WTC11 (cell line): ENCODE measurements at regions of chr12 and their contacts with region 1.

Region 1: GRCh38 chr12:54398995-54399793 is 14.7 kb upstream of the ZNF385A start:
- DNase-seq: peak; percentile 94
- ATAC-seq: peak; percentile 94
- H3K4me3 Mint-ChIP-seq: no peak overlapping the region
- H3K27ac Mint-ChIP-seq: no peak overlapping the region
- H3K4me1 Mint-ChIP-seq: peaks cover under 1% of the 10 kb centered on the region
- H3K27me3 Mint-ChIP-seq: peaks cover under 1% of the 10 kb centered on the region
- CTCF ChIP-seq: peak; percentile 99

Region 2: DNA sequence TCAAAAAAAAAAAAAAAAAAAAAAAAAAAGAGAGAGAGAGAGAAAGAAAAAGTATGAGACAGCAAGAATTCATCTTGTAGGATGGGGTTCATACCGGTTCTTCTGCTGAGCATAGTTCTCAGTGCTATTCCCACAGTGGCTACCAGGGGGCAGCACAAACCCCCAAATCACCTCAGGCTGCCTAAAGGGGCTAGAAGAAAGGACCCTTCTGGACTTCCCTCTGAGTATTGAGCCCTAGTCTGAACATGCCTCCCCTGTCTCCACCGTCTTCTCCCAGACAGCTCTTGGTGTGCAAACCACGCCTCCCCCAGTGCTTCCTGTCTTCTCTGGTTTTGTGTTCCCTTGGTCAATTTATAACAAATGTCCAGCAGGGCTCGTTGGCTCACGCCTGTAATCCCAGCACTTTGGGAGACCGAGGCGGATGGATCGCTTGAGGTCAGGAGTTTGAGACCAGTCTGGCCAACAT is 179.1 kb before region 1 on chr12:
- CTCF ChIA-PET with region 1: interaction called, 11 read pairs
- POLR2A ChIA-PET with region 1: no interaction called
- DNase-seq: peak; percentile 86
- ATAC-seq: peak; percentile 64
- H3K4me3 Mint-ChIP-seq: no peak overlapping the region
- H3K27ac Mint-ChIP-seq: no peak overlapping the region
- H3K4me1 Mint-ChIP-seq: peaks cover 31% of the 10 kb centered on the region
- H3K27me3 Mint-ChIP-seq: peaks cover 39% of the 10 kb centered on the region
- CTCF ChIP-seq: peak; percentile 73

Region 3: GRCh38 chr12:54368709-54369583 is 30.2 kb before region 1 on chr12:
- CTCF ChIA-PET with region 1: interaction called, 35 read pairs
- POLR2A ChIA-PET with region 1: no interaction called
- DNase-seq: peak; percentile 90
- ATAC-seq: peak; percentile 49
- H3K4me3 Mint-ChIP-seq: peak overlapping the region; percentile 75
- H3K27ac Mint-ChIP-seq: no peak overlapping the region
- H3K4me1 Mint-ChIP-seq: peaks cover 24% of the 10 kb centered on the region
- H3K27me3 Mint-ChIP-seq: peaks cover 49% of the 10 kb centered on the region
- CTCF ChIP-seq: peak; percentile 73

Region 4: GRCh38 chr12:54411391-54412241 is 12.4 kb after region 1 on chr12:
- CTCF ChIA-PET with region 1: interaction called, 109 read pairs
- POLR2A ChIA-PET with region 1: interaction called, 3 read pairs
- DNase-seq: peak; percentile 59
- ATAC-seq: peak; percentile 91
- H3K4me3 Mint-ChIP-seq: no peak overlapping the region
- H3K27ac Mint-ChIP-seq: no peak overlapping the region; the same call in 1 of the 2 replicates
- H3K4me1 Mint-ChIP-seq: peaks cover 13% of the 10 kb centered on the region
- H3K27me3 Mint-ChIP-seq: peaks cover 7% of the 10 kb centered on the region
- CTCF ChIP-seq: no peak

Region 5: DNA sequence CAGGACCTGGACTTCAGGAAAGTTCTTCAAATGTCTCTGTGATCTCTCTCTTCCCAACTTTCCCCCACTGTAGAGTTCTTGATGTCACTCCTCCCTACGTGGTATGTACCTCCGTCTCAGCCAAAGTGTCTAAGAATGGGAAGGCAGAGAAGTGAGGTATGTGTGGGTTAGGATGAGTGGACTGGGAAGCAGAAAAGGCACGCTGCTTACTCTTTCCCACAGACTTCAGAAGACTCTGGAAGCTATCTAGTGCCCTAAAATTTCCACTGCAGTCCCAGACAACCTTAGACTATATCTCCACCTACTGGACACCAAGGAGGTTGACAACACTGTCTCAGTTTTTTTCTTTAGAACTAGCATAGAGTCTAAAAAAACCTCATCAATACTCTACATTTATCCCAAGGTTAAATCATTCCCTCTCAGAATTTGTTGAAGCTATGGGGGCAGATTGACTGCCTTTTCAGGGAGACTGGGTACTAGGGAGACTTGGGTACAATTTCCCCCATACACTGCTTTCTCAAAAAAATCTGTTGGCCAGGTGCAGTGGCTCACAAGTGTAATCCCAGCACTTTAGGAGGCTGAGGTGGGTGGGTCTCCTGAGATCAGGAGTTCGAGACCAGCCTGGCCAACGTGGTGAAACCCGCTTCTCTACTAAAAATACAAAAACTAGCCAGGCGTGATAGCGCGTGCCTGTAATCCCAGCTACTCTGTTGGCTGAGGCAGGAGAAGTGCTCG is 40.5 kb after region 1 on chr12:
- CTCF ChIA-PET with region 1: interaction called, 361 read pairs
- POLR2A ChIA-PET with region 1: interaction called, 3 read pairs
- DNase-seq: no peak
- ATAC-seq: peak; percentile 88
- H3K4me3 Mint-ChIP-seq: no peak overlapping the region
- H3K27ac Mint-ChIP-seq: no peak overlapping the region
- H3K4me1 Mint-ChIP-seq: peaks cover 7% of the 10 kb centered on the region
- H3K27me3 Mint-ChIP-seq: peaks cover 99% of the 10 kb centered on the region
- CTCF ChIP-seq: peak; percentile 74

Region 6: DNA sequence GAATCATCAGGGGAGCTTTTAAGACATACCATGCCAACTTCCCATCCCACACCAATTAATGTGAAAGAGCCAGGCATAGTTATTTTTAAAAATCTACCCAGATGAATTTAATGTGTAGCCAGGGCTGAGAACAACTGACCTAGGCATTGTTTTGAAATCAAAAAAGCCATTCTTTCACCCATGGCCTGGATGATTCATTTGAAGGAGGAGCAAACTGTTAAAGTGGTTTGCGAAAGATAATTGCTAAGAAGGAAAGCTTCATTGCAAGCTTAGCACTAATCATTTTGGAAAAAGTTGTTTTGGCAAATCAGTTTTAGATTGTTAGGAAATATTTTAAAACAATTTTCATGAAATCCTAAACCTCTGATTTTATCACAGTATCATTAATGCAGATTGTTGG is 76.3 kb after region 1 on chr12:
- CTCF ChIA-PET with region 1: interaction called, 12 read pairs
- POLR2A ChIA-PET with region 1: no interaction called
- DNase-seq: no peak
- ATAC-seq: no peak
- H3K4me3 Mint-ChIP-seq: no peak overlapping the region
- H3K27ac Mint-ChIP-seq: no peak overlapping the region
- H3K4me1 Mint-ChIP-seq: peaks cover 13% of the 10 kb centered on the region
- H3K27me3 Mint-ChIP-seq: peaks cover 29% of the 10 kb centered on the region
- CTCF ChIP-seq: no peak

Region 7: GRCh38 chr12:54565310-54565985 is 166.3 kb after region 1 on chr12:
- CTCF ChIA-PET with region 1: interaction called, 19 read pairs
- POLR2A ChIA-PET with region 1: no interaction called
- DNase-seq: peak; percentile 45
- ATAC-seq: peak; percentile 36
- H3K4me3 Mint-ChIP-seq: peak overlapping the region; percentile 37
- H3K27ac Mint-ChIP-seq: peak overlapping the region; percentile 85
- H3K4me1 Mint-ChIP-seq: peaks cover 43% of the 10 kb centered on the region
- H3K27me3 Mint-ChIP-seq: peaks cover 98% of the 10 kb centered on the region
- CTCF ChIP-seq: no peak